Calu3 (cell line): ENCODE measurements at regions of chr18 and their contacts with region 1.

Region 1: GRCh38 chr18:1544016-1544415 is 639.3 kb downstream of the ADCYAP1 start:
- DNase-seq: no peak
- H3K4me3 Mint-ChIP-seq: no peak overlapping the region
- H3K27ac Mint-ChIP-seq: no peak overlapping the region
- H3K4me1 Mint-ChIP-seq: no peaks in the 10 kb centered on the region
- H3K27me3 Mint-ChIP-seq: no peaks in the 10 kb centered on the region
- CTCF ChIP-seq: no peak

Region 2: DNA sequence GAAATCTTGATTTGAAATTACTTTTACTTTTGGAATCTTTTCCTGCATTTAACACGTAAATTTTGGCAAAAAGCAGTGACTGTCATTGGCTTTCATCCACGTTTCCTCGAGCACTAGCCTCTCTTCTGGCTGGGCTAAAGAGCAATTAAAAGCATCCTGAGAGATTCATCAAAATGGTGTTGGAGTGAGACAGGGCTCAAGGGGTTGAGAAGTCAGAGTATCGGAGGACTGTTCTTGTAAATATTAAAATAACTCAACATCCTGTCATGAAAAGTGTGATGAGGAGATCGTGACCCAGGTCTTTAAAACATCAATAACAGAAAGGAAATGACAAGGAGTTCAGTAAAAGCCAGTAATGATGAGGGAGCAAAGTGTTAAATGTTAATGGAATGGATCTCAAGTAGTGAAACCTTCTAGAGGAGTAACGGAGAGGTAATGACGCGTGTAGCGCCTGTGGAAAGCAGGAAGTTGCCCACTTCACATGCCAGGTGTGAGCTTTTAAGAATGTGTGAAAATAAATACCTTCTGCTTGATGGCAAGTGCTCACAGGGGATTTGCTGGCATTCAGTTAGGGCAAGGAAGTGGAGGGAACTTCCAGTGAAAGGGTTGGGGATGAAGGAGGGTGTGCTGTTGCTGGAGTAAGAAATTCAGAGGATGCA is 115.0 kb after region 1 on chr18:
- CTCF ChIA-PET with region 1: interaction called, 12 read pairs
- intact Hi-C with region 1: no loop called
- DNase-seq: no peak
- H3K4me3 Mint-ChIP-seq: no peak overlapping the region
- H3K27ac Mint-ChIP-seq: no peak overlapping the region
- H3K4me1 Mint-ChIP-seq: no peaks in the 10 kb centered on the region
- H3K27me3 Mint-ChIP-seq: no peaks in the 10 kb centered on the region
- CTCF ChIP-seq: no peak